Dorsolateral prefrontal cortex (tissue), 120 donors: ENCODE measurements at regions of chr11 and their contacts with region 1.

Region 1: GRCh38 chr11:65779851-65780577 is 762 bp downstream of the AP5B1 start:
- DNase-seq: peak in 9 of 10 donors; percentile 43 to 85 (median 63)
- H3K4me3 ChIP-seq: peak overlapping the region; percentile 58 to 99 (median 88)
- H3K27ac ChIP-seq: peak overlapping the region in 54 of 59 donors; percentile 33 to 91 (median 74)
- H3K27me3 ChIP-seq: peaks cover 0 to 5% (median 0%) of the 10 kb centered on the region in 45 donors
- CTCF ChIP-seq: peak; percentile 58 to 96 (median 85)

Region 2: GRCh38 chr11:65652511-65653231 is 127.3 kb before region 1 on chr11:
- intact Hi-C with region 1: no loop called
- DNase-seq: peak; percentile 75 to 94 (median 84)
- H3K4me3 ChIP-seq: peak overlapping the region; percentile 34 to 79 (median 65)
- H3K27ac ChIP-seq: peak overlapping the region; percentile 85 to 99 (median 96)
- H3K27me3 ChIP-seq: peaks cover 0 to under 1% (median 0%) of the 10 kb centered on the region in 45 donors
- CTCF ChIP-seq: peak in 30 of 56 donors; percentile 5 to 61 (median 28)

Region 3: DNA sequence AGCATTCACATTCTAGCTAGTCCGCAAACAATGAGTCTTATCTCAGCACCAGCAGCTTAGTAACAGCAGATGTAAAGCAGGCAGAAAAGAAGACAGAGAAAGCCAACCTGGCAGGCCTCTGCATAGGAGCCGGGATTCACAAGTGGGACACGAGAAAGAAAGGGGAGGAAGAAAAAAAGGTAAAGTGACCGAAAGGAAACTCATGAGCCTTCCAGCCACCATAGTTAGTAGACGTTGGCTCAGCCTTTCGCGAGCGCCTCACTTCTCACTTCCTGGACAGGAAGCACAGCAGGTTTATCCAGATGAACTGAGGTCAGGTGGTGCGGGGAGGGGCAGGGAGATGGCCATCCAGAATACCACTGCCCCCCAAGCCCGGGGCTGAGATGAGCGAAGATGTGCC is 87.6 kb before region 1 on chr11:
- intact Hi-C with region 1: no loop called
- DNase-seq: no peak
- H3K4me3 ChIP-seq: no peak overlapping the region
- H3K27ac ChIP-seq: no peak overlapping the region
- H3K27me3 ChIP-seq: no peaks in the 10 kb centered on the region
- CTCF ChIP-seq: no peak

Region 4: GRCh38 chr11:65720237-65720934 is 59.6 kb before region 1 on chr11 and contains the start of gene RNASEH2C:
- intact Hi-C with region 1: loop called in 1 of 2 experiments (anchors 5 kb)
- DNase-seq: peak; percentile 81 to 92 (median 90)
- H3K4me3 ChIP-seq: peak within 1 kb of the TSS; percentile 55 to 97 (median 83)
- H3K27ac ChIP-seq: peak within 1 kb of the TSS; percentile 77 to 99 (median 94)
- H3K27me3 ChIP-seq: no peaks in the 10 kb centered on the region
- CTCF ChIP-seq: peak in 45 of 56 donors; percentile 12 to 66 (median 42)
- total RNA-seq, gene RNASEH2C: 27.6 to 76.0 (median 41.1) TPM

Region 5: DNA sequence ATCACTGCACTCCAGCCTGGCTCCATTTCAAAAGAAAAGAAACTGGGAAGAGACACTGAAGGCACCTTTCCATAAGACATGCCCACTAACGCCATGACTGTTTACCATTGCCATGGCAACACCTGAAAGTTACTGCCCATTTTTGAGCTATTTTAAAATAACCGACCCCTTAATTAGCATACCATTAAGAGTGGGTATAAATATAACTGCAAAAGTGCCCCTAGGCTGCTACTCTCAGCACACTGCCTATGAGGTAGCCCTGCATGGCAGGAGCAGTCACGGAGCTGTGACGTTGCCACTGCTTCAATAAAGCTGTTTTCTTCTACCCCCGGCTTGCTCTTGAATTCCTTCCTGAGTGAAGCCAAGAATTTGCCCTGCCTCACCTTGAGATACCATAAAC is 49.5 kb before region 1 on chr11:
- intact Hi-C with region 1: no loop called
- DNase-seq: no peak
- H3K4me3 ChIP-seq: no peak overlapping the region
- H3K27ac ChIP-seq: no peak overlapping the region
- H3K27me3 ChIP-seq: no peaks in the 10 kb centered on the region
- CTCF ChIP-seq: no peak

Region 6: DNA sequence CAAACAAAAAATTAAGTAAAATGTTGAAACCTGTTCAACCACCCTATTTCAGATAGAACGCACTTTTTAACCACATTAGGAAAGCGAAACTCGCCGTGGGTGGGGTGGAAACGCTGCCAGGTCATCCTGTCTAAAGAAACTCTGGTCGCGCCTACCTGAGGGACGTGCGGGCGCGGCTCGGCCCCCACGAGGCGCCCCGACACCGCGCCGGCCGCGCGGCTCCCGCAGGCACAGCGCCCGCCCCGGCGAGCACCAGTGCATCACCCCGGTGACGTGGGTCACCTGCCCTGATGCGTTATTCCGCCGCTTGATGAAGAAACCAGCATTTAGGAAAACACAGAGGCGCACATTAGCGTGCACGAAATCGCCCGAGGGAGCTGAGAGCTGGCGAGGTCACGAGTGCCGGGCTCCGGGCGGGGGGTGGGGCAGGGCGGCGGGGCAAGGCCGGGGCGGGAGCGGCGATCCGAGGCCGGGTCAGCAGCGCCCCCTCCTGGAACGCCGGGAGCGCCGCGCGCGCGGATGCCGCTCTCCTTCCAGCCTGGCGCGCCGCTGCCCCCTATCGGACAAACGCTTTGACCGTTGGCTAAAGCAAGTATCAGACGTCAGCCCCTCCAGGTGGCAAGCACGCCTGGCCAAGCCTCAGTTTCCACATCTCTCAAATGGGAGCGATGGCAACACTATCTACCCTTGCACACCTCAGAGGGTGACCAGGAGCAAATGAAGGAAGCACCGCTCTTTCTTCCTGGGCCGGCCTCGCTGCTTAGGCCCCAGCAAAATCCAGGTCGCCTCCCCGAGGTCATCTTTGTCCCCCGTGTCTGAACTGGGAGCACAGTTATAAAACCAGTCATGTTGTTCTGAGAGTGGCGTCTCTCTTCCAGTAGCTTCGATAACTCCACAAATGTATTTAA is 38.1 kb after region 1 on chr11:
- intact Hi-C with region 1: loop called (anchors 1 kb)
- DNase-seq: peak; percentile 88 to 95 (median 92)
- H3K4me3 ChIP-seq: peak overlapping the region; percentile 48 to 97 (median 73)
- H3K27ac ChIP-seq: peak overlapping the region in 51 of 59 donors; percentile 19 to 91 (median 75)
- H3K27me3 ChIP-seq: no peaks in the 10 kb centered on the region
- CTCF ChIP-seq: peak; percentile 95 to 100 (median 100)

Region 7: DNA sequence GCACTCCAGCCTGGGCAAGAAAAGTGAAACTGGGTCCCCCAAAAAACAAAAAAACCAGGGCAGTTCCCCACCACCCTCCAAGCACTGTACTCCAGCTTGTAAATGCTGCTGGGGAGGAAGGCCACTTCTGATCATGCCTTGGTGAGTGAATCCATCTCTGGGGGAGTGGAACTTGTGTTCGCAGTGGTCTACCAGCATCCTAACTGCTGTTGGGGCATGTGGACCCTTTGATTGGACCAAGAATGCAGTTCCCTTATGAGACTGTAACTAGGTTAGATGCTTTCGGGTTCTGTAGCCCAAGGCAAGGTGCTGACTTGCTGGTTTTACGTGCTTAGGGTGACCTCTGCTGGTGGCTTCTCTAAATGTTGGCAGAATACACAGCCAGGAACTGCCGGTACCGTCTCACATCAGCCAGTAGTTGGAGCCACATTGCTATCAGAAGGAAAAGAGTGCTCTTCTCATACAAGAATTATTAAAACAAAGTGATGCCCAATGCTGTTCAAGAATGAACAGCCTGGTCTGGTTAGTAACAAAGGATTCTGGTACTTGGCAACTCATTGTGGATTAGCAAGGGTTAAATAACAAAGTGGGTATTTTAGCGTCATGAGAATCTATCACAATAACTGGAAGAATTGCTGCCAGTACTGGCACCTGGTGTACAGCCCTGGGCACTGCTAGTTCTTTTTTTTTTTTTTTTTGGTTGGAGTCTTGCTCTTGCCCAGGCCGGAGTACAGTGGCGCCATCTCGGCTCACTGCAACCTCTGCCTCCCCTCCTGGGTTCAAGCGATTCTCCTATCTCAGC is 209.0 kb after region 1 on chr11:
- intact Hi-C with region 1: loop called in 1 of 2 experiments (anchors 5 kb)
- DNase-seq: peak; percentile 53 to 97 (median 88)
- H3K4me3 ChIP-seq: peak overlapping the region in 4 of 59 donors; percentile 6 to 26 (median 16)
- H3K27ac ChIP-seq: peak overlapping the region in 19 of 59 donors; percentile 0 to 67 (median 37)
- H3K27me3 ChIP-seq: no peaks in the 10 kb centered on the region
- CTCF ChIP-seq: peak; percentile 74 to 99 (median 95)